ENCODE measurements at regions of chr3 and their contacts with region 1.

Region 1: GRCh38 chr3:57764794-57765193 is 8.7 kb downstream of the SLMAP start:
- DNase-seq: no peak
- H3K4me3 ChIP-seq: no peak overlapping the region
- H3K27ac ChIP-seq: no peak overlapping the region
- H3K4me1 ChIP-seq: peaks cover 0 to 73% (median 24%) of the 10 kb centered on the region in 3 donors
- H3K27me3 ChIP-seq: no peaks in the 10 kb centered on the region
- CTCF ChIP-seq: no peak
- POLR2A ChIP-seq: no peak

Region 2: DNA sequence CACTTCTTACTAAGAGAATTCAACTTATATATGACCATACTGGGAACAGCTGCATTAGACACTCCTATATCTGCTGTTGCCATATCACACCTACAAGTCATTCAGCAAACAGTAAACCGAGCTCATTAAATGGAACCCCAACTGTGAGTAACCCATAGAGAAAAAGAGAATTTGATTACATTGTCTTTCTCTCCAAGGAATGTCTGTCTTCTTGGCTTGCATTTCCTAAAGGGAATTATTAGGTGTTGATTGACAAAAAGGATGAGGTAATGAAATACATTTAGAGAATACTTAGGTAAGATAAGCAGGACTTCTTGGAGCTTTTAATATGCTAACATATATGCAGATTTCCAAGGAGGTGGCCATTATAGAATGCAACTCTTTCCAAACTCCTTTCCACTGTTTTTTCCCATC is 68.1 kb after region 1 on chr3:
- intact Hi-C with region 1: loop called (anchors 10 kb)
- DNase-seq: no peak
- H3K4me3 ChIP-seq: no peak overlapping the region
- H3K27ac ChIP-seq: no peak overlapping the region
- H3K4me1 ChIP-seq: peaks cover 0 to 18% (median 0%) of the 10 kb centered on the region in 3 donors
- H3K27me3 ChIP-seq: no peaks in the 10 kb centered on the region
- CTCF ChIP-seq: no peak
- POLR2A ChIP-seq: no peak

Region 3: DNA sequence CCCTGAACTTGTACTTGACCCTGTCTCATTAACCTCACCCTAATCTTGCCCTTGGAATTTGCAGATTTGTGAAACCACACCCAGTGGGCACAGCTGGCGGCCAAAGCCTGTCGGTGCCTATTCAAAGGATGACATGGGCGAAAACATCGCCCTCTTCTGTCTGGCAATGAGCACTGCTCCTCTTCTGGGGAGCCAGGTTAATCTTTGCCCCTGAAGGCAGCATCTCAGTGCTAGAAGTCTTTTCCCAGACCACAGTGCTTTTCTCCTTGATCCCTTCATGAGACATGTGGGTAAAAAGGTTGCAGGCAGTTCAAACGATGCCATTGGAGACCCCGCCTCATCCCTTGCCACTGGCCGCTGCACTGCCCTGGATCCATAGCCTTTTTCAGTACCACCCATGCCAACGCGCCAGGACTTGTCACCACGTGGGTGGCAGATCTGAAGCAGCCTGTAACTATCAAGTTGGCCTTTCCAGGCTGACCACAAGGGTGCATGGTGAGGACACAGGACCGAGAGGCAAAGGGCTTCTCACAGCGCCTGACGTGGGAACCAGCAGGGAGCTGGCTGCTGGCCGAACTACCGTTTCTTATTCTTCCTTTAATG is 452.5 kb after region 1 on chr3:
- intact Hi-C with region 1: no loop called
- DNase-seq: peak; percentile 12
- H3K4me3 ChIP-seq: peak overlapping the region in 1 of 4 donors; percentile 39
- H3K27ac ChIP-seq: peak overlapping the region; percentile 56 to 93 (median 86)
- H3K4me1 ChIP-seq: peaks cover 18 to 58% (median 38%) of the 10 kb centered on the region in 3 donors
- H3K27me3 ChIP-seq: no peaks in the 10 kb centered on the region
- CTCF ChIP-seq: peak; percentile 69 to 91 (median 79)
- POLR2A ChIP-seq: no peak

Measured in esophagus squamous epithelium (tissue), 5 donors.